ENCODE measurements at regions of chr7 and their contacts with region 1.

Region 1: DNA sequence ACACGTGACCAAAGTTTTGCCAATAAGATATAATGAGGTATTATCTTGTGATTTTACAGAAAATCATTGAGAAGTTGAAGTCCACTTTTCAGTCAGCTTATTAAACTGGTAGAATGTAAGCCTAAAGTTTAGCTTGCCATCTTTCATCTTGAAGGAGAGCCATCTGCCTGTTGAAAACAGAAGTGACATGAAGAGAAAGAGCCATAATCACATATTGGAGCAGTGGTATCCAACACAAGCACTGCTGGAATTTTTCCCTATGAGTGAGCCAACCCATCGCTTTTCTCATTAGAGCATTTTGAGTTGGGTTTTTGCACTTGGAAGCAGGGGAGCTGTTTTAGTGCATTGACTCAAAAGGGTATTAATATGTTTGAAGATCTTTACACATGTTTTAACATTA is 117.6 kb upstream of the FERD3L start:
- DNase-seq: no peak
- ATAC-seq: no peak
- H3K4me3 ChIP-seq: no peak overlapping the region
- H3K27ac ChIP-seq: no peak overlapping the region
- H3K4me1 ChIP-seq: no peaks in the 10 kb centered on the region
- H3K27me3 ChIP-seq: no peaks in the 10 kb centered on the region

Region 2: DNA sequence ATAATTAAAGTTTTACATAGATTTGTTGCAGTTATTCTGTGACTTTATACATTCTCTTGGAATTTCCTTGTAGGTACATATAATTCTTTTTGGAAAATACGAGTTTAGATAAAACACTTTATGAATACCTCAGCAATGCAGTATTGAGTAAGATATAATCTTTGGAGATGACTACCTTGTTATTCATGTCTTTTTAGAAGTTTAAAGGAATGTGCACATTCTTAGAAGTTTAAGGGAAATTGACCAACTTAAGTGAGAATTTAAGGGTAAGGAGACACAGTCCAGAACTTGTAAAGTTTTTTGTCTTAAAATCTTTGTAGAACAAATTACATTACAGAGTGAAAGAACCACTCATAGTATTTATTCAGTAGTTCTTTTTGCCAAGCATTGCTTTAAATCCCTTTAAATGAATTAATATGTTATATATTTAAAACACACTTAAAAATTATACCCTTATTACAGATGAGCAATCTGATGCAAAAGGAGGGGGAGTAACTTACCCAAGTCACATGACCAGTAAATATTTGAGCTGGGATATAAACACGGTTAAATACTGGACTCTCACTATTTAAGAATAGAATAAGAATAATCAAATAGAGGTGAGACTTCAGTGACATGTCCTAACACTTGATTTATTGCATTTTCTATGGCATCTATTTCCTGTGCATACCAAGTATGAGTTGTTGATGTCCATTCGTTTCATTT is 21.9 kb after region 1 on chr7:
- intact Hi-C with region 1: loop called in 1 of 4 experiments (anchors 2 kb)
- DNase-seq: no peak
- ATAC-seq: no peak
- H3K4me3 ChIP-seq: no peak overlapping the region
- H3K27ac ChIP-seq: no peak overlapping the region
- H3K4me1 ChIP-seq: no peaks in the 10 kb centered on the region
- H3K27me3 ChIP-seq: no peaks in the 10 kb centered on the region

Region 3: GRCh38 chr7:19312416-19312815 is 49.6 kb after region 1 on chr7:
- intact Hi-C with region 1: no loop called
- DNase-seq: no peak
- ATAC-seq: no peak
- H3K4me3 ChIP-seq: no peak overlapping the region
- H3K27ac ChIP-seq: no peak overlapping the region
- H3K4me1 ChIP-seq: no peaks in the 10 kb centered on the region
- H3K27me3 ChIP-seq: no peaks in the 10 kb centered on the region